ENCODE measurements at regions of chr10 and their contacts with region 1.

Region 1: GRCh38 chr10:30999070-30999712 is 32.5 kb downstream of the ZNF438 start:
- DNase-seq: no peak
- H3K4me3 Mint-ChIP-seq: peak overlapping the region; percentile 73
- H3K27ac Mint-ChIP-seq: peak overlapping the region; percentile 93
- H3K4me1 Mint-ChIP-seq: peaks cover 48% of the 10 kb centered on the region
- H3K27me3 Mint-ChIP-seq: no peaks in the 10 kb centered on the region

Region 2: DNA sequence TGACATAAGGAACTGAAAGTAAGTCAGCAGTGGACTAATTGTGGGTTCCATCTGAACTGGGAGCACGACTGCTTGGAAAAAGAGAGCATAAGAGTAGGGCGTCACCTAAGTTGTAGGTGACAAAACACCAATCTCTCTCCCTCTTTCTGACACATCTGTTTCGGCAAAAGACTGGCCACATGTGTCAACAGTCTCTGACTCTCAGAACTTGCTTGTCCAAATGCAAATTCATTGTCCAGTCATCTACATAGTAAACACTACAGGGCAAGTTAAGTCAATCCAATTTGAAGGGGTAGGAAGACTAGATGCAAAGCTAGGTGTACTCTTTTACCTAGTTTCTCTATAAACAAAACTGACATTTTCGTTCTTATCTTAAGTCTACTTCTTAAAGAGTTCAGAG is 55.2 kb before region 1 on chr10:
- intact Hi-C with region 1: no loop called
- DNase-seq: no peak
- H3K4me3 Mint-ChIP-seq: no peak overlapping the region
- H3K27ac Mint-ChIP-seq: no peak overlapping the region
- H3K4me1 Mint-ChIP-seq: peaks cover 21% of the 10 kb centered on the region
- H3K27me3 Mint-ChIP-seq: no peaks in the 10 kb centered on the region

Region 3: GRCh38 chr10:30967650-30968410 is 31.4 kb before region 1 on chr10:
- intact Hi-C with region 1: loop called (anchors 1 kb)
- DNase-seq: no peak
- H3K4me3 Mint-ChIP-seq: no peak overlapping the region
- H3K27ac Mint-ChIP-seq: peak overlapping the region; percentile 60
- H3K4me1 Mint-ChIP-seq: peaks cover 35% of the 10 kb centered on the region
- H3K27me3 Mint-ChIP-seq: no peaks in the 10 kb centered on the region

Region 4: GRCh38 chr10:31031558-31032257 is 32.5 kb after region 1 on chr10 and contains the start of gene ZNF438:
- intact Hi-C with region 1: loop called (anchors 2 kb)
- DNase-seq: peak; percentile 94
- H3K4me3 Mint-ChIP-seq: peak within 1 kb of the TSS; percentile 86
- H3K27ac Mint-ChIP-seq: peak within 1 kb of the TSS; percentile 98
- H3K4me1 Mint-ChIP-seq: peaks cover 27% of the 10 kb centered on the region
- H3K27me3 Mint-ChIP-seq: no peaks in the 10 kb centered on the region
- total RNA-seq, gene ZNF438: 5.8 and 6.1 TPM in 2 replicates

Region 5: GRCh38 chr10:31340343-31340742 is 341.2 kb after region 1 on chr10:
- intact Hi-C with region 1: loop called (anchors 5 kb)
- DNase-seq: no peak
- H3K4me3 Mint-ChIP-seq: no peak overlapping the region
- H3K27ac Mint-ChIP-seq: no peak overlapping the region
- H3K4me1 Mint-ChIP-seq: peaks cover 23% of the 10 kb centered on the region
- H3K27me3 Mint-ChIP-seq: no peaks in the 10 kb centered on the region

Region 6: GRCh38 chr10:31383810-31384588 is 384.8 kb after region 1 on chr10:
- intact Hi-C with region 1: no loop called
- DNase-seq: no peak
- H3K4me3 Mint-ChIP-seq: no peak overlapping the region
- H3K27ac Mint-ChIP-seq: no peak overlapping the region
- H3K4me1 Mint-ChIP-seq: peaks cover 12% of the 10 kb centered on the region
- H3K27me3 Mint-ChIP-seq: no peaks in the 10 kb centered on the region